ENCODE measurements at regions of chr6 and their contacts with region 1.

Region 1: DNA sequence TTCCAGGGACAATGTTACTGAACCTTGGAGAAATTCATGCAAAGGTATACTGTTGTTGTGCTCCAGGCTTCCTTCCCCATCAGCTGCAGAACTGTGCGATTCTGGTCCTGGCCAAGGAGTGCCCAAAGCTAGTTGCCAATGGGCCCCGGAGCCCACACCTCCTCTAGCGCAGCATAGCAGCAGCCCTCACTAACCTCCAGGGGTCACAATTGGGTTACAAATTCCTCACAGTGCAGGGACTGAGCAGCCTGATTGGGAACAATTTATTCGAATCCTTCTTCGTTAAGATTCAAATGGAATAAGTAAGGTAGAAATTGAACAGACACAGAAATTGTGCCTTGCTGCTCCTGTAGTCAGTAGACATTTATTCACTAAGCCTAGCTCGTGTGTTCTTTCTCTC is 284.9 kb downstream of the PRKN start:
- DNase-seq: peak in 4 of 10 donors; percentile 6 to 57 (median 32)
- H3K4me3 ChIP-seq: peak overlapping the region in 56 of 59 donors; percentile 1 to 64 (median 41)
- H3K27ac ChIP-seq: peak overlapping the region in 7 of 59 donors; percentile 4 to 78 (median 23)
- H3K27me3 ChIP-seq: no peaks in the 10 kb centered on the region
- CTCF ChIP-seq: peak in 54 of 56 donors; percentile 31 to 92 (median 68)

Region 2: GRCh38 chr6:162389353-162390085 is 53.2 kb before region 1 on chr6:
- intact Hi-C with region 1: no loop called
- DNase-seq: no peak
- H3K4me3 ChIP-seq: no peak overlapping the region
- H3K27ac ChIP-seq: no peak overlapping the region
- H3K27me3 ChIP-seq: no peaks in the 10 kb centered on the region
- CTCF ChIP-seq: no peak

Region 3: GRCh38 chr6:162727309-162728182 is 284.9 kb after region 1 on chr6 and contains the starts of genes PACRG and PRKN:
- intact Hi-C with region 1: loop called in 1 of 2 experiments (anchors 10 kb)
- DNase-seq: peak; percentile 98 to 99 (median 99)
- H3K4me3 ChIP-seq: peak within 1 kb of the TSS; percentile 39 to 99 (median 90)
- H3K27ac ChIP-seq: peak within 1 kb of the TSS in 58 of 59 donors; percentile 13 to 96 (median 86)
- H3K27me3 ChIP-seq: no peaks in the 10 kb centered on the region
- CTCF ChIP-seq: peak in 18 of 56 donors; percentile 3 to 47 (median 26)
- total RNA-seq, gene PACRG: 4.8 to 37.4 (median 13.1) TPM
- total RNA-seq, gene PRKN: 13.1 to 41.5 (median 26.1) TPM

Region 4: GRCh38 chr6:162750776-162751175 is 308.1 kb after region 1 on chr6:
- intact Hi-C with region 1: no loop called
- DNase-seq: no peak
- H3K4me3 ChIP-seq: no peak overlapping the region
- H3K27ac ChIP-seq: no peak overlapping the region
- H3K27me3 ChIP-seq: no peaks in the 10 kb centered on the region
- CTCF ChIP-seq: no peak

Region 5: DNA sequence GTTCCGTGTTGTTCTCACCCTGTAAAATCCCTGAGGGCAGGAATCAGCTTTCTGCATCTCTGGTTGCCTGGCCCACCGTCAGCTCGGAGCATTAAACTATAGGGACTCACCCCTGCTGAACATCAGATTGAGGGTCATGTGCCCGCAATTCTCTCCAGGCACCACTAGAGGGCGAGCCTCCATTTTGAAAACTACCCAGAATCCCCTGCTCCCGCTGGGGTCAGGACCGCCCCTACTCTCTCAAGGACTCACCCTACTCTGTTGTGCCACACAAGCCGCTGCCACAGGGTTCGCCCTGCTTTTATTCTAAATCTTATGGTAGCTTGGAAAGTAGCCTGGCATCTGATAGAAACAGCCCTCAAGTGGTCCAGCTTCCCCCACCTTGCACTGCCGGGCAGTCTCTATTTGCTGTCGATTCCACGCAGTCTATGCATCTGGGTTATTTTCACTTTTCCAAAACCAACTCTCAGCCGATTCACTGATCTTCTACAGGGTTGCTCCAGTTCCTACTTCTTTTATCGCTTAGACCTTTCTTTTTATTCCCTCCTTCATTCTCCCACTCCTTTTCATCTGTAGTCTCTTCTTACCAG is 727.7 kb after region 1 on chr6:
- intact Hi-C with region 1: loop called in 1 of 2 experiments (anchors 10 kb)
- DNase-seq: no peak
- H3K4me3 ChIP-seq: no peak overlapping the region
- H3K27ac ChIP-seq: peak overlapping the region in 34 of 59 donors; percentile 1 to 100 (median 68)
- H3K27me3 ChIP-seq: no peaks in the 10 kb centered on the region
- CTCF ChIP-seq: peak in 55 of 56 donors; percentile 9 to 66 (median 47)

Region 6: DNA sequence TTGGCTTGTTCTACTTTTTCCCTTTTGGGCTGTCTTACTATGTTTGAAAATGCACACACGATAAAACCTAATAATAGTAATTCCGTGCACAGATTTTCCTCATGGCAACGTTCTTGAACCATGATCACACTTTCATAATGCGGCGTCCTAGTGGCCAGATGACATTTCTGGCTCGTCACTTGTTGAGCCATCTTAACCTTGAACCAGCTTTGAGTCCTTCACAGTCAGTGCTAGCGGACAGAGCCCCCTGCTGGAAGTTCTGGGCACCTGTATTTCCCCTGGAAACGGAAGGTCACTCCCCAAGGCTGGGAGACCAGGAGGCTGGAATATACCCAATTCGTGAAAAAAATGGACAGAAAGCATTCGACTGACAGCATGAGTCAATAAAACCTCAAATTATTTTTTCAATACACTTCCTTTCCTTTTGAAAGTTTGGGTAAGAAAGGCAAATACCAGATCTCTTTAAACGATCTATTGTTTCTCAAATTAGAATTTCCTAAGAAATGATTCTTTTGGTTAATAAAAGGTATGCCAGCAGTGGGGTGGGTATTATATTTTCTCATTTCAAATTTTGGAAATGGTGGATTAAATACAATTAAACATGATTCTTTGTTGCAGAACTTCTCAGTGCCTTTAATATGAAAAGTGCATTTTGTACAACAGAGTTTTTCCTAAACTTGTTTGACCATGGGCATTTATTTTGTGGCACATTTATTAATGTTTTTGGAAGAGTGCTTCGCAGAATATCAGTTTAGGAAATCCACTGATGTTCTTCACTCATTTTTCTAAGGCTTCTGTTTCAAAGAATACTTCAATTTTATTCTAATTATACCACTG is 1514.1 kb after region 1 on chr6:
- intact Hi-C with region 1: loop called in 1 of 2 experiments (anchors 2 kb)
- DNase-seq: peak; percentile 25 to 83 (median 74)
- H3K4me3 ChIP-seq: peak overlapping the region in 18 of 59 donors; percentile 1 to 45 (median 20)
- H3K27ac ChIP-seq: peak overlapping the region in 9 of 59 donors; percentile 0 to 35 (median 14)
- H3K27me3 ChIP-seq: no peaks in the 10 kb centered on the region
- CTCF ChIP-seq: peak; percentile 52 to 96 (median 89)

Region 7: DNA sequence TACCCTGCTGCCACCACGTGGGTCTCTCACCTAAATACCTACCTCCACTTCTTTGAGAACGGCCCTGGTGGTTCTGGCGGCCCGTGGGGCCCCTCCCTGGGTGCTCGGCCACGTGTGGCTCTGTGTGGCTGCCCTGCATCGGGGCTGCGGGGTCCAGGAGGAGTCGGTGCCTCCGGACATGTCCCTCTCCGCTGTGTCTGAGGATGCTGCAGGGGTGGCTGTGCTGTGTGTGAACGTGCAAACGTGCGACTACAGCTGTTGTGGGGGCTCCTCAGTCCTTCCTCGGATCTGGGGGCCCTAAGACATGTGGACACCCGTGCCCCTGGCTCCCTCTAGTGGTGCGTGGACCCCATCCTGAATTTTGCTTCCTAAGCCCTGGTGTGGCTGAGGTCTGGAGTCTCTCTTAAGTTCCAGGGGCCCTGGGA is 1663.7 kb after region 1 on chr6:
- intact Hi-C with region 1: loop called in 1 of 2 experiments (anchors 10 kb)
- DNase-seq: peak in 7 of 10 donors; percentile 40 to 69 (median 67)
- H3K4me3 ChIP-seq: peak overlapping the region in 39 of 59 donors; percentile 5 to 49 (median 28)
- H3K27ac ChIP-seq: peak overlapping the region in 49 of 59 donors; percentile 1 to 79 (median 55)
- H3K27me3 ChIP-seq: no peaks in the 10 kb centered on the region
- CTCF ChIP-seq: peak; percentile 29 to 75 (median 63)

Measured in dorsolateral prefrontal cortex (tissue), 120 donors.